BJ (cell line): ENCODE measurements at regions of chr14 and their contacts with region 1.

Region 1: GRCh38 chr14:51473808-51474207 is 177.9 kb upstream of the FRMD6 start:
- DNase-seq: peak; percentile 83
- H3K4me3 ChIP-seq: no peak overlapping the region
- H3K27me3 ChIP-seq: no peaks in the 10 kb centered on the region
- CTCF ChIP-seq: no peak

Region 2: GRCh38 chr14:51310505-51310944 is 163.3 kb before region 1 on chr14:
- CTCF ChIA-PET with region 1: no interaction called
- POLR2A ChIA-PET with region 1: interaction called, 18 read pairs
- DNase-seq: peak; percentile 59
- H3K4me3 ChIP-seq: no peak overlapping the region
- H3K27me3 ChIP-seq: no peaks in the 10 kb centered on the region
- CTCF ChIP-seq: no peak

Region 3: DNA sequence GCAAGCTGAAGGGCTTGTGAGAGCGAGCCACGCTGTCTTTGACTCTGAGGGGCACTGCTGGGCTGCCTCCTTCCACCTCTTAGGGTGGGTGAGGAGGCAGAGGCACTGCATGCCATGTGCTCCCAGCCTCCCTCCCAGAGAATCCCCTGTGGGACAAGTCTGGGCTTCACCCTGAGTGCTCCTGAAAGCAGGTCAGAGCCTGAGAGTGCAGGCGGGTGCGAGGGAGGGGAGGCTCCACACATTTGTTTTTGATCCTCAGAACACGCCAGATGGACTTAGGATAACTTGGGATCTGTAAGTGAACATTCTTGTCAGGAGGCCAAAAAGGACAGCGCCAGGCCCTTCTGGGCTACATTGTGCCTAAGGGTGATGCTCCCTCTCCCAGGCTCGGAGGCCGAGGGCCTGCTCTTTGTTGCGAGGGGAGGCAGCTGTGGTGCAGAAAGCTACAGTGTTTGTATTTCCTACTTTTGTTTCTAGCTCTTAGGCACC is 78.4 kb before region 1 on chr14:
- CTCF ChIA-PET with region 1: no interaction called
- POLR2A ChIA-PET with region 1: no interaction called
- DNase-seq: peak; percentile 91
- H3K4me3 ChIP-seq: no peak overlapping the region
- H3K27me3 ChIP-seq: no peaks in the 10 kb centered on the region
- CTCF ChIP-seq: peak; percentile 15; the same call in 1 of the 2 replicates

Region 4: GRCh38 chr14:51498411-51499227 is 24.8 kb after region 1 on chr14:
- CTCF ChIA-PET with region 1: no interaction called
- POLR2A ChIA-PET with region 1: no interaction called
- DNase-seq: no peak
- H3K4me3 ChIP-seq: no peak overlapping the region
- H3K27me3 ChIP-seq: no peaks in the 10 kb centered on the region
- CTCF ChIP-seq: no peak

Region 5: GRCh38 chr14:51715250-51715649 is 241.4 kb after region 1 on chr14:
- CTCF ChIA-PET with region 1: no interaction called
- POLR2A ChIA-PET with region 1: interaction called, 10 read pairs
- DNase-seq: no peak
- H3K4me3 ChIP-seq: no peak overlapping the region
- H3K27me3 ChIP-seq: no peaks in the 10 kb centered on the region
- CTCF ChIP-seq: no peak